Naive thymus-derived CD4-positive, alpha-beta T cell (primary cell): ENCODE measurements at regions of chr13 and their contacts with region 1.

Region 1: GRCh38 chr13:75876360-75877050 is 240.4 kb downstream of the LMO7 start:
- DNase-seq: peak in 8 of 9 donors; percentile 13 to 61 (median 45)
- ATAC-seq: peak; percentile 86
- H3K4me3 ChIP-seq: no peak overlapping the region
- H3K4me3 Mint-ChIP-seq: peak overlapping the region in 9 of 10 donors; percentile 16 to 78 (median 59)
- H3K27ac ChIP-seq: no peak overlapping the region
- H3K27ac Mint-ChIP-seq: peak overlapping the region in 2 of 9 donors; percentile 9 to 90
- H3K4me1 ChIP-seq: peaks cover 0 to 3% of the 10 kb centered on the region in 2 donors
- H3K4me1 Mint-ChIP-seq: peaks cover 2 to 19% (median 12%) of the 10 kb centered on the region in 7 donors
- H3K27me3 ChIP-seq: no peaks in the 10 kb centered on the region
- H3K27me3 Mint-ChIP-seq: peaks cover 0 to 12% (median 5%) of the 10 kb centered on the region in 5 donors

Region 2: DNA sequence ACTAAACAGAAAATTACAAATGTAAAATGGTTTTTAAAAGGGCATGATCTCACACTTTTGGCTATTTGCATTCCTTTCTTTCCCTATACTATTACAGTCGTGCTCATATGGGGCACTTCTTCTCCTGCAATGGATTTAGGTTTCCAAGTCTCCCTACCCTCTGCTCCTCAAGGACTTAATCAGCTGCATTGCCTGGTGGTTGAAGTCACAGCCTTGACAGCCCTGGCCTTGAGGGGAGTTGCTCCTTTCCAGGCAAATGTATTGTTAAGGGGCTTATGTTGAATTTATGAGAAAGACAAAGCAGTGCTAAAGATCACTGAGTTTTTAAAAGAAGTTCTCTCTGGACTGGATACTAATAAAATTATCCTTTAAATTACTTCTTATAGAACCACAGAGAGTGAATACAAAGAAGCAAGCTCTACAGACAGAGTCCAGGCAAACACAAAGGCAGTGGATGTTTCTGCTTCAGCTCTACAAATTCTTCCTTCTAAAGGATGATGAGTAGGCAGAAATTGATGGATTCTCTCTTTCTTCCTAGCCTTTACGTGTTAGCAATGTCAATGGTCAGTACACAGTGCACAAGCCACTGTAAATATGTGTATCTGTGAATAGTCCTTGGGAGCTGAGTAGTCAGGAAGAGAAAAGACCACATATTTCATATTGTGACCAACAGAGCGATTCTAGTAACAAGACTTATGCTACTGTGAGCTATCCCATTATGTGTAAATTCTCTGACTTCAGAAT is 785.5 kb before region 1 on chr13:
- CTCF ChIA-PET with region 1: no interaction called
- POLR2A ChIA-PET with region 1: no interaction called
- intact Hi-C with region 1: no loop called
- DNase-seq: no peak
- ATAC-seq: no peak
- H3K4me3 ChIP-seq: no peak overlapping the region
- H3K4me3 Mint-ChIP-seq: no peak overlapping the region
- H3K27ac ChIP-seq: no peak overlapping the region
- H3K27ac Mint-ChIP-seq: no peak overlapping the region
- H3K4me1 ChIP-seq: no peaks in the 10 kb centered on the region
- H3K4me1 Mint-ChIP-seq: peaks cover 0 to 1% (median 0%) of the 10 kb centered on the region in 7 donors
- H3K27me3 ChIP-seq: no peaks in the 10 kb centered on the region
- H3K27me3 Mint-ChIP-seq: peaks cover 0 to 15% (median 6%) of the 10 kb centered on the region in 5 donors

Region 3: GRCh38 chr13:75549262-75550158 is 327.0 kb before region 1 on chr13 and contains the start of gene UCHL3:
- CTCF ChIA-PET with region 1: no interaction called
- POLR2A ChIA-PET with region 1: no interaction called
- intact Hi-C with region 1: loop called in 1 of 2 experiments (anchors 10 kb)
- DNase-seq: peak; percentile 94 to 99 (median 97)
- ATAC-seq: peak; percentile 97
- H3K4me3 ChIP-seq: peak within 1 kb of the TSS; percentile 95
- H3K4me3 Mint-ChIP-seq: peak within 1 kb of the TSS; percentile 91 to 99 (median 96)
- H3K27ac ChIP-seq: peak within 1 kb of the TSS; percentile 84
- H3K27ac Mint-ChIP-seq: peak within 1 kb of the TSS; percentile 94 to 99 (median 98)
- H3K4me1 ChIP-seq: peaks cover 15% of the 10 kb centered on the region in 2 donors
- H3K4me1 Mint-ChIP-seq: peaks cover 27 to 53% (median 46%) of the 10 kb centered on the region in 7 donors
- H3K27me3 ChIP-seq: no peaks in the 10 kb centered on the region
- H3K27me3 Mint-ChIP-seq: peaks cover 0 to 2% (median 0%) of the 10 kb centered on the region in 5 donors
- total RNA-seq, gene UCHL3: 18.6 to 35.8 (median 20.6) TPM

Region 4: DNA sequence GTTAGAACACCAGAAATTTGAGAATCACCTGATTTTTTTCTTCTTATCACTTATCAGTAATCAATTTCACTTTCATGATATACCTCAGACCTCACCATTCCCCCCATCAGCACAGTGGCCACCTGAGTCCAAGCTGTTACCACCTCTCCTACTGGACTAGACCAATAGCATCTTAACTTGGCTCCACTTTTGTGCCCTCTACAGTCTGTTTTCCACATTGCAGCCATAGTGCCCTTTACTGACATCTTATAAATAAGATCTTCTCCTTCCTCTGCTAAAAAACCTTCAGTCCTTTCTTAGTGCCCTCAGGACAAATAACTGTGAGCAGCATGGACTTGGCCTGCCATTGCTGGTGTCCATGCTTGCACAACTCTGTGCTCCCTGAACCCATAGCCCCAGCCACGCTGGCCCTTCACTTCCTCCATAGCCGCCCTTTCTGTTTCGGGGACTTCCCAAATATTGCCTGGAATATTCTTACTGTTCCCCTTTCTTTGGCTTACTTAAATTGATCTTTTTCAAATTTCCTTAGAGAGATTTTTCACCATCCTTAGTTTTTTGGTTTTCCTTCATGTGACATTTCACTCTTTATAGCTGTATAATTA is 140.4 kb after region 1 on chr13:
- CTCF ChIA-PET with region 1: no interaction called
- POLR2A ChIA-PET with region 1: no interaction called
- intact Hi-C with region 1: loop called (anchors 1 to 2 kb)
- DNase-seq: peak in 5 of 9 donors; percentile 2 to 21 (median 4)
- ATAC-seq: no peak
- H3K4me3 ChIP-seq: no peak overlapping the region
- H3K4me3 Mint-ChIP-seq: no peak overlapping the region
- H3K27ac ChIP-seq: no peak overlapping the region
- H3K27ac Mint-ChIP-seq: no peak overlapping the region
- H3K4me1 ChIP-seq: no peaks in the 10 kb centered on the region
- H3K4me1 Mint-ChIP-seq: peaks cover 0 to 11% (median 0%) of the 10 kb centered on the region in 7 donors
- H3K27me3 ChIP-seq: no peaks in the 10 kb centered on the region
- H3K27me3 Mint-ChIP-seq: peaks cover 0 to 5% (median 0%) of the 10 kb centered on the region in 5 donors

Region 5: GRCh38 chr13:76667551-76667950 is 791.0 kb after region 1 on chr13:
- CTCF ChIA-PET with region 1: no interaction called
- POLR2A ChIA-PET with region 1: no interaction called
- intact Hi-C with region 1: loop called in 1 of 2 experiments (anchors 5 kb)
- DNase-seq: peak in 6 of 9 donors; percentile 11 to 38 (median 20)
- ATAC-seq: peak; percentile 63
- H3K4me3 ChIP-seq: no peak overlapping the region
- H3K4me3 Mint-ChIP-seq: no peak overlapping the region
- H3K27ac ChIP-seq: no peak overlapping the region
- H3K27ac Mint-ChIP-seq: no peak overlapping the region
- H3K4me1 ChIP-seq: no peaks in the 10 kb centered on the region
- H3K4me1 Mint-ChIP-seq: no peaks in the 10 kb centered on the region
- H3K27me3 ChIP-seq: no peaks in the 10 kb centered on the region
- H3K27me3 Mint-ChIP-seq: peaks cover 0 to 10% (median 0%) of the 10 kb centered on the region in 5 donors

Region 6: DNA sequence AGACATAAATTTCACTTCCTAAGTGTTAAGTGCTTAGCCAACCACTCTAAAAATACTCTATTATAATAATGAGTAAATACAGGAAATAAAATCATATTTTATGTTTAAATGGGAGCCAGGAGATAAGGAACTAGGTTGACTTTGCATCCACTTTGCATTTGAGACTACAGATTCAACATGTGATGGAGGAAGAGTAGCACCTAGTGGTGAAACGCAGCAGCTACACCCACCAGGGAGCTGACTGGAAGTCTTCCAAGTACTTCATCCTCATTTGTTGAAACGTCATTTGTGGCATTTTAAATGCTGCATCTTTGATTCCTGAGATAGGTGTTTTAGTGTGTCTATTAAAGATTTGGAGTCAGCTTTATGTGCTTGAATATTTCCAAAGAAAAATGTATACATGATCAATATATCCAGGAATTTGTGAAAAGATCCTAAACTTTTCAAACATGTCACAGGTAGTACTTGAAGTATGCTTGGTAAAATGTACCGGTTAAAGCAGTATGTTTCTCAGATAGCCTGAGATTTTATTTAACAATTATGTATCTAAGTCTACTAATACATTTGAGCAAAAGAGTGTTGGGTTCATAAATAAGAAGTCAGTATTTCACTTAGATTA is 1027.1 kb after region 1 on chr13:
- CTCF ChIA-PET with region 1: interaction called, 21 read pairs
- POLR2A ChIA-PET with region 1: no interaction called
- intact Hi-C with region 1: loop called (anchors 1 kb)
- DNase-seq: peak in 8 of 9 donors; percentile 51 to 75 (median 66)
- ATAC-seq: peak; percentile 94
- H3K4me3 ChIP-seq: no peak overlapping the region
- H3K4me3 Mint-ChIP-seq: no peak overlapping the region
- H3K27ac ChIP-seq: no peak overlapping the region
- H3K27ac Mint-ChIP-seq: no peak overlapping the region
- H3K4me1 ChIP-seq: no peaks in the 10 kb centered on the region
- H3K4me1 Mint-ChIP-seq: no peaks in the 10 kb centered on the region
- H3K27me3 ChIP-seq: peaks cover 0 to 3% of the 10 kb centered on the region in 2 donors
- H3K27me3 Mint-ChIP-seq: peaks cover 4 to 32% (median 30%) of the 10 kb centered on the region in 5 donors

Region 7: DNA sequence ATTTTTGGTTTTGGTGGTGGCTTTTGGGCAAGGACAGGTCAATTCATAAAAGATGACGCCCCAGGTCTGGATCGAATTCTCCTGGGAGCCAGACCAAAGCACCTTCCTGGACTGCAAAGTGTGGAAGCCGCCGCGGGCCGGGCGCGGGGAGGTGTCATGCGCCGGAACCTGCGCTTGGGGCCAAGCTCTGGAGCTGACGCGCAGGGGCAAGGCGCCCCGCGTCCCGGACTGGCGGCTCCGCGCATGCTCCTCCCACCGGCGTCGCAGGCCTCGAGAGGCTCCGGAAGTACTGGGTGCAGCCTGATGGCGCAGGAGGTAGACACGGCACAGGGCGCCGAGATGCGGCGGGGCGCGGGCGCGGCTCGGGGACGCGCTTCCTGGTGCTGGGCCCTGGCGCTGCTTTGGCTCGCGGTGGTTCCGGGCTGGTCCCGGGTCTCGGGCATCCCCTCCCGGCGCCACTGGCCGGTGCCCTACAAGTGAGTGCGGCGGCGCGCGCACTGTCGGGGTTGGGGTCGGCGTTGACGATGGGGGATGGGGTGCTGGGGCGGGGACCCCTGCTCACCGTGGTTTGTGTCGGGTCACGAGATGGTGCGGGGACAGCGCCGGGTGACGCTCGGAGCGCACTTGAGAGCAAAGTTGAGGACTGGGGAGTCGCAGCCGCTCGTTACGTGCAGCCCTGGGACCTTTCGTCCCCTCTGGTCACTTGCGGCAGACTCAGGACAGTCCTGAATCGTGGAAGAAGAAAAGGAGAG is 1115.5 kb after region 1 on chr13 and contains the start of gene CLN5:
- CTCF ChIA-PET with region 1: no interaction called
- POLR2A ChIA-PET with region 1: no interaction called
- intact Hi-C with region 1: loop called in 1 of 2 experiments (anchors 5 kb)
- DNase-seq: peak; percentile 93 to 98 (median 96)
- ATAC-seq: peak; percentile 92
- H3K4me3 ChIP-seq: peak within 1 kb of the TSS; percentile 87
- H3K4me3 Mint-ChIP-seq: peak within 1 kb of the TSS; percentile 88 to 99 (median 96)
- H3K27ac ChIP-seq: peak within 1 kb of the TSS; percentile 96
- H3K27ac Mint-ChIP-seq: peak within 1 kb of the TSS; percentile 96 to 99 (median 99)
- H3K4me1 ChIP-seq: peaks cover 12 to 19% of the 10 kb centered on the region in 2 donors
- H3K4me1 Mint-ChIP-seq: peaks cover 27 to 59% (median 53%) of the 10 kb centered on the region in 7 donors
- H3K27me3 ChIP-seq: peaks cover 0 to 3% of the 10 kb centered on the region in 2 donors
- H3K27me3 Mint-ChIP-seq: peaks cover 0 to 12% (median 0%) of the 10 kb centered on the region in 5 donors
- total RNA-seq, gene CLN5: 18.9 to 45.3 (median 27.7) TPM